Gastrocnemius medialis (tissue), 4 donors: ENCODE measurements at regions of chr15 and their contacts with region 1.

Region 1: DNA sequence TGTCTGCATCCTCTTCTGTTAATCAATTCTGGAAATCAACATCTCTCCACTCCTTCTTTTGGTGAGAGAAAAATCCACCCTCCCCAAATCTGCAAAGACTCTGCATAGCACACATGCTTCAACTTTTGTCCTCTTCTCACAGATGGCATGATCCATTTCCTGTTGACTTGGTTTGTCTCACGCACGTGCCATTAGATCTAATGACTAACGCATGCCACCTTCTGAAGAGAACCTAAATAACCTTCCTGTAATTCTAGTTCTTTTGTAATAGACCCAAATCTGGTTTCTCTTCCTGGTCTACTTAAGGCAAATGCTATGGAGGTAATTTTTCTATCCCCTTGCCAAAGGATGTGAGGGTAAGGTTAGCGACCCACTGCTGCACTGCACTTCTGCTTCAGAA is 51.0 kb upstream of the ATOSA start:
- DNase-seq: peak; percentile 43 to 58
- ATAC-seq: peak; percentile 28 to 68
- H3K4me3 ChIP-seq: no peak overlapping the region
- H3K27ac ChIP-seq: peak overlapping the region; percentile 68 to 89 (median 86)
- H3K4me1 ChIP-seq: peaks cover 45 to 60% of the 10 kb centered on the region in 2 donors
- H3K27me3 ChIP-seq: no peaks in the 10 kb centered on the region
- CTCF ChIP-seq: no peak
- POLR2A ChIP-seq: peak in 1 of 2 donors; percentile 29

Region 2: DNA sequence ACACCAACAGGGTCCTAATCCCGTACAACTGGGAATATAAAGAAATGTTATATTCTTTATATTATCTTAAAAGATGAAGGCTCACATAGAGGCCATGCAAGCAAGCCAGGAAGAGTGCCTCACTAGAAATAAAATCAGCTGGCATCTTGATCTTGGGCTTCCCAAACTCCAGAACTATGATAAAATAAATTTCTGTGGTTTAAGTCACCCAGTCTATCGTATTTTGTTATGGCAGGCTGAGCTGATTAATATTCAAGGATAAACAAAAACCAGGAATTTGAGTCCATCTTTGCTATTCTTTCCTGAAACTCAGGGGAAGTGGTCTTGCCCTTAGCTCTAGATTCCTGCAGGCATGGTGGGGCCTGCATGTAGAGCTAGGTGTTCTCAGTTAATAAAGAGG is 93.7 kb before region 1 on chr15:
- in situ Hi-C with region 1: no loop called
- intact Hi-C with region 1: loop called (anchors 5 kb)
- DNase-seq: no peak
- ATAC-seq: no peak
- H3K4me3 ChIP-seq: no peak overlapping the region
- H3K27ac ChIP-seq: peak overlapping the region in 1 of 4 donors; percentile 11
- H3K4me1 ChIP-seq: peaks cover 12 to 30% of the 10 kb centered on the region in 2 donors
- H3K27me3 ChIP-seq: no peaks in the 10 kb centered on the region
- CTCF ChIP-seq: no peak
- POLR2A ChIP-seq: no peak

Region 3: DNA sequence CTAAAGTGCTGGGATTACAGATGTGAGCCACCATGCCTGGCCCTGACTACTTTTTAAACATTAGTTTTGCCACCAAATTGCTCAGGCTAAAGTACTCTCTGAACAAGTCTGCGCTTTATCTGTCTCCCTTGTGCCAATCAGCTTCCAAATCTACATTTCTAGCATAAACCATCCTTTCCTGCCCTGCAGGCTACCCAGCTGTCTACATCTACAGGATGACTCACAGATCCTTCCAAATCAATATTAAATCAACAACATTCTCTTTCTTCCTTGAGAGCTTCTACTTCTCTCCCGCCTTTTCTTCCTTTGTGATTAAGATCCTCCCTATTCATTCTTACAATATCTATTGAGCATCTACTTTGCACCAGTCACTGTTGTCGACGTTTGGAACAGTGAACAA is 35.0 kb before region 1 on chr15:
- in situ Hi-C with region 1: no loop called
- intact Hi-C with region 1: loop called (anchors 1 kb)
- DNase-seq: no peak
- ATAC-seq: no peak
- H3K4me3 ChIP-seq: no peak overlapping the region
- H3K27ac ChIP-seq: no peak overlapping the region
- H3K4me1 ChIP-seq: no peaks in the 10 kb centered on the region
- H3K27me3 ChIP-seq: no peaks in the 10 kb centered on the region
- CTCF ChIP-seq: no peak
- POLR2A ChIP-seq: no peak

Region 4: GRCh38 chr15:52790162-52790708 is 60.1 kb after region 1 on chr15 and contains the start of gene ONECUT1:
- in situ Hi-C with region 1: no loop called
- intact Hi-C with region 1: no loop called
- DNase-seq: no peak
- ATAC-seq: peak in 1 of 2 donors; percentile 63
- H3K4me3 ChIP-seq: peak within 1 kb of the TSS; percentile 50 to 71 (median 56)
- H3K27ac ChIP-seq: no peak within 1 kb of the TSS
- H3K4me1 ChIP-seq: peaks cover 15 to 39% of the 10 kb centered on the region in 2 donors
- H3K27me3 ChIP-seq: peaks cover 76 to 98% (median 84%) of the 10 kb centered on the region in 3 donors
- CTCF ChIP-seq: no peak
- POLR2A ChIP-seq: no peak
- total RNA-seq, gene ONECUT1: not detected